ENCODE measurements at regions of chr9 and their contacts with region 1.

Region 1: GRCh38 chr9:132288361-132288760 is 66.4 kb downstream of the SETX start:
- DNase-seq: no peak

Region 2: GRCh38 chr9:132341177-132341840 is 52.9 kb after region 1 on chr9:
- intact Hi-C with region 1: loop called (anchors 10 kb)
- DNase-seq: peak in 28 of 42 donors; percentile 12 to 77 (median 46)

Region 3: DNA sequence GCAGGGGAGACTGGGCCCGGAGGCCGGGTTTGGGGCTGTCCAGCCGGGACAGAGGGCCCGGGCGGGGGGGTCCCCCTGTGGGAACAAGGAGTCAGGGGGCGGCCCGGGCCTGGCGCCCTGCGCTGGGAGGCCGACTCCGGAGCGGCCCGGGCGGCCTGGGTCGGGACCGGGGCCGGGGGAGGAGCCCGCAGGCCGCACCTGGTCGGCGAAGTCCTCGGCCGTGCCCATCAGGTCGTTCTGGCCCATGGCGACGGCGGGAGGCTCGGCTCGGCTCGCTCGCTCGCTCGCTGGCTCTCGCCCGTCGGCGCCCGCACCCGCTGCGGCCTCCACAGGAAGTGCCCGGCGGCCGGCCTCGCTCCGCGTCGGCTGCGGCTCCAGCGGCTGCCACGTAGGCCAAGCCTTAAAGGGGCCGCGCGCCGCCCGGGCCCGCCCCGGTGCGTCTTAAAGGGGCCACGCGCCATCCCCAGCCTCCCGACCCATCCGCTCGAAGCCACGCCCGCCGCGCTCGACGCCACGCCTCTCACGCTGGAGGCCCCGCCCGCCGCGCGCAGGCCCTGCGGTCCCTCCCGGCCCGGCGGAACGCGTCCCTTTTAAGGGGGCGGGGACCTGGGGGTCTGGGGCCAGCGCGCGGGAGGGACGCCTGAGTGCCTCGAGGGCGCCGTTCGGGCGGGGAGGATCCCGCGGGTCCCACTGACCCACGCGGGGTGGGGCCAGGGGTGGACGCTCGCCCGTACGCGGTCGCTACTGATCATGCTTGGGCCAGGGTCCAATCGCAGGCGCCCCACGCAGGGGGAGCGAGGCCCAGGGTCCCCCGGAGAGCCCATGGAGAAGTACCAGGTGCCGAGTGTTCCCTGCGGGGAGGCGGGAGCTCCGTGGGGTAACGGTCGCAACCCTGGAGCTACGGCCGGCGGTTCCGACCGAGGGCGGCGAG is 1087.6 kb after region 1 on chr9 and contains the starts of genes STKLD1 and SURF4:
- intact Hi-C with region 1: no loop called
- DNase-seq: peak; percentile 91 to 99 (median 97)

Measured in head of caudate nucleus (tissue), 42 donors.